ENCODE measurements at regions of chr2 and their contacts with region 1.

Region 1: GRCh38 chr2:198417836-198418235 is 613.4 kb downstream of the PLCL1 start:
- DNase-seq: no peak
- ATAC-seq: no peak
- H3K4me3 ChIP-seq: no peak overlapping the region
- H3K27ac ChIP-seq: no peak overlapping the region
- H3K4me1 ChIP-seq: no peaks in the 10 kb centered on the region
- H3K27me3 ChIP-seq: no peaks in the 10 kb centered on the region
- CTCF ChIP-seq: no peak
- POLR2A ChIP-seq: no peak
- RAD21 ChIP-seq: no peak

Region 2: DNA sequence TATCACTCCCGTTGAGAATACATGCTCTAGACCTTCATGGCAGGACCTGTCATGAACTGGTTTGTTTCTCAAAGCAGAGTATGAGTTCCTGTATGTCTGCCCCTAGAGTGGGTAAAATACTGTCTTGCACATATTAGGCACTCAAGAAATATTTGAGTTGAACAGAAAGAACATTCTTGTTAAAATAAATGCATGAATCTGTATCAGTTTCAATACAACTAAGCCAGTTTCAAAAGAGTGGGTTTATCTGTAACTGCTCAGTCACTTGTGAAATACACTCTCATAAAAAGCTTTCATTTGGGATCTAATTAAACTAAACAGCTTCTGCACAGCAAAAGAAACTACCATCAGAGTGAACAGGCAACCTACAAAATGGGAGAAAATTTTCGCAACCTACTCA is 811.7 kb before region 1 on chr2:
- CTCF ChIA-PET with region 1: no interaction called
- POLR2A ChIA-PET with region 1: no interaction called
- dilution Hi-C with region 1: no loop called
- in situ Hi-C with region 1: no loop called
- intact Hi-C with region 1: no loop called
- DNase-seq: no peak
- ATAC-seq: no peak
- H3K4me3 ChIP-seq: no peak overlapping the region
- H3K27ac ChIP-seq: no peak overlapping the region
- H3K4me1 ChIP-seq: no peaks in the 10 kb centered on the region
- H3K27me3 ChIP-seq: no peaks in the 10 kb centered on the region
- CTCF ChIP-seq: no peak
- POLR2A ChIP-seq: no peak
- RAD21 ChIP-seq: no peak

Region 3: DNA sequence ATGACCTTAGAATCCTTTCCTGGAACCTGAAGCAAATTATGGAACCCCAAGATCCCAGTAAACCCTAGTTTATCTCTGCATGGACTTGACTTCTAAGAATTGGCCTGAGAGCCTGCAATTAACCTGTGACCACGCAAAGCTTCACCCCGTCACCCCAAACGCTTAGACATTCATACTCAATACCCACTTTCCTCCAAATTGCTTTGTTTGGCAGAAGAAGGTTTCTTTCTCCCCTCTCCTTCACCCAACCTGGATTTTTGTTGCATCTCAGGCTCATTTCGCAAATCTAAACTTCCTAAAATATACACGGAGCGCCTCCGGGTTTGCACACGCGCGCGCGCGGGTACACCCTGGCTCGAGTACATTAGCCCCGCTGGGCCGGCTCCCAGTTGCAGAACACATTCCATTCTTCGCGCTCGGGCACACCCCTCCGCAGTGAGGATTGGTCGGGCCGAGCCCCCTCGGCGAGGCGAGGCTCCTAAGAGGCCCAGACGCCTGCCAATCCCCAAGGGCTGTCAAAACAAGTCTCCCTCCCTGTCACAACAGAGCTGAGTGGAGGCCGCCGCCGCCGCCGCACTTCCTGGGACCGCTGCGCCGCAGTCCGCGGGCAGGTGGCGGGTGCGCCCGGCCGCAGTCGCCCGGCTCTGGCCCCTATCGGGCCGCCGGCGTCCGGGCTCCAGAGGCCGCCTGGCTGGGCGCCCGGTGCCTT is 613.6 kb before region 1 on chr2 and contains the start of gene PLCL1:
- CTCF ChIA-PET with region 1: no interaction called
- POLR2A ChIA-PET with region 1: no interaction called
- dilution Hi-C with region 1: no loop called
- in situ Hi-C with region 1: no loop called
- intact Hi-C with region 1: no loop called
- DNase-seq: peak; percentile 87
- ATAC-seq: peak; percentile 99
- H3K4me3 ChIP-seq: peak within 1 kb of the TSS; percentile 62
- H3K27ac ChIP-seq: no peak within 1 kb of the TSS
- H3K4me1 ChIP-seq: no peaks in the 10 kb centered on the region
- H3K27me3 ChIP-seq: peaks cover 19% of the 10 kb centered on the region
- CTCF ChIP-seq: no peak
- POLR2A ChIP-seq: no peak
- RAD21 ChIP-seq: no peak
- total RNA-seq, gene PLCL1: 0.18 and 0.56 TPM in 2 replicates

Region 4: GRCh38 chr2:198063242-198063641 is 354.6 kb before region 1 on chr2:
- CTCF ChIA-PET with region 1: no interaction called
- POLR2A ChIA-PET with region 1: no interaction called
- dilution Hi-C with region 1: no loop called
- in situ Hi-C with region 1: no loop called
- intact Hi-C with region 1: no loop called
- DNase-seq: no peak
- ATAC-seq: no peak
- H3K4me3 ChIP-seq: no peak overlapping the region
- H3K27ac ChIP-seq: no peak overlapping the region
- H3K4me1 ChIP-seq: no peaks in the 10 kb centered on the region
- H3K27me3 ChIP-seq: no peaks in the 10 kb centered on the region
- CTCF ChIP-seq: no peak
- POLR2A ChIP-seq: no peak
- RAD21 ChIP-seq: no peak

Region 5: DNA sequence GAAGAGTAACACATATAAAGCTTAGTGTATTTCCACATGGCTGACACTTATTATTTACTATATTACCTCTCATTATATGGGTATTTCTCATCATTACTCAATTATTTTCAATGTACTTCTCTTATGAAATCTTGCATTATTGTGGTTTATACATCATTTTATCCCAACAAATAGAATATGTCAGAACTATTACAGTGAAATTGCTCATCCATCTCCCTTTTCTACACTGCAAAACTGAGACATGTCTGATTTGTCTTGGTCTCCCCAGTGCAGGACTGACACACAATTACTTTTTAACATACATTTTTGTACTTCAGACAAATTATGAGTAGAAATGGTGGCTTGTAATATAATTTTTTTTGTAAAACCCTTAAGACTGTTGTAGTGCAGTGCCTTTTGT is 12.5 kb before region 1 on chr2:
- CTCF ChIA-PET with region 1: no interaction called
- POLR2A ChIA-PET with region 1: no interaction called
- dilution Hi-C with region 1: no loop called
- in situ Hi-C with region 1: no loop called
- intact Hi-C with region 1: loop called (anchors 1 kb)
- DNase-seq: no peak
- ATAC-seq: no peak
- H3K4me3 ChIP-seq: no peak overlapping the region
- H3K27ac ChIP-seq: no peak overlapping the region
- H3K4me1 ChIP-seq: no peaks in the 10 kb centered on the region
- H3K27me3 ChIP-seq: no peaks in the 10 kb centered on the region
- CTCF ChIP-seq: no peak
- POLR2A ChIP-seq: no peak
- RAD21 ChIP-seq: no peak

Region 6: GRCh38 chr2:198534756-198535155 is 116.9 kb after region 1 on chr2:
- CTCF ChIA-PET with region 1: no interaction called
- POLR2A ChIA-PET with region 1: no interaction called
- dilution Hi-C with region 1: no loop called
- in situ Hi-C with region 1: no loop called
- intact Hi-C with region 1: no loop called
- DNase-seq: no peak
- ATAC-seq: no peak
- H3K4me3 ChIP-seq: no peak overlapping the region
- H3K27ac ChIP-seq: no peak overlapping the region
- H3K4me1 ChIP-seq: no peaks in the 10 kb centered on the region
- H3K27me3 ChIP-seq: no peaks in the 10 kb centered on the region
- CTCF ChIP-seq: no peak
- POLR2A ChIP-seq: no peak
- RAD21 ChIP-seq: no peak

Measured in IMR-90 (cell line).